ENCODE measurements at regions of chr2 and their contacts with region 1.

Region 1: DNA sequence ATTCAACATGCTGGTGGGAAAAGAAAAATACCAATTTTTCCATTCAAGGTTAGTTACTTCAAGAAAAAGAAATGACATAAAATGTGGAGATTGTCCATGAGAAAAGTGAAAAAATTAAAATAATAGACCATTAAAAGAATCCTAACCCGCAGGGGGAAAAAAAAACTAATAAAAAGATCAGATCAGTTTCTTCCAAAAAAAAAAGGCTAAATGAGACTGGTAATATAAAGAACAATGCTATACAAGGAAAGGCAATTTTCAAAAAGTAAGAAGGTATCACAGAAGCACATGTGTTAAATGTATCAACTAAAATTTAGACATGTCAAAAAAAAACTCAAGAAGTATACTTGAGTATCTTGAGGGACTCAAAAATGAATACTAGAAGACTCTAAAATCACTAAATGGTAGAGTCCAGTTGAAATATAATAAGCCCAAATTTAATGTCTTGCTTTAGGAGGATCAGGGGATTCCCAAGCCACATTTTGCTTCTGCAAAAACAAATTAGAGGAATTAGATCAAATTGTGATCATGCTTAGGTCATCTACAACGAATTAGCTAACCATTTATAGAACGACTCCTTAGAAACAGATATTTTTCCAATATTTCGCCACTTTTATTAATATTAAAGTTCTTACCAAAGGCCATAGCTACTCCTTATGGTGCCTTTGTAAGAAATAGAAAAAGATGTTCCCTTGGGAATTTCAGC is 35.8 kb upstream of the GLS start:
- DNase-seq: no peak
- ATAC-seq: no peak
- H3K4me3 ChIP-seq: no peak overlapping the region
- H3K4me3 Mint-ChIP-seq: no peak overlapping the region
- H3K27ac ChIP-seq: no peak overlapping the region
- H3K27ac Mint-ChIP-seq: no peak overlapping the region
- H3K4me1 ChIP-seq: no peaks in the 10 kb centered on the region
- H3K4me1 Mint-ChIP-seq: no peaks in the 10 kb centered on the region
- H3K27me3 ChIP-seq: no peaks in the 10 kb centered on the region
- H3K27me3 Mint-ChIP-seq: no peaks in the 10 kb centered on the region

Region 2: DNA sequence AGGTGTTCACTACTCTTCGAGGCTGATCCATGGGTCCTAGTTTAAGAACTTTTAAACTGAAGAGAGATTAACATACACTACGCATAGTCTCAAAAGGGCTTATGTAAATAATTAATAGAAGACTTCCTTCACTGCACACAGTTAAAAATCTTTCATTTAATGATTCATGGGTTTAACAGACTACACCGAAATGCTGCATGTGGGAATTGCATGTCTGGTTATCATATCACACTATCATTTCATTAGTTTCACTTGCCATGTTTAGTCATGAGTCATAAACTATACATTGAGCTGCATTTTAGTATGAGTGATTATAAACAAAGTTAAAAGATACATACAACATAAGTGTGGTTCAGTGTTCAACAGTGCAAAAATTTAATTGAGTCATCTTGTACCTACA is 67.0 kb after region 1 on chr2:
- CTCF ChIA-PET with region 1: no interaction called
- POLR2A ChIA-PET with region 1: interaction called in 1 of 2 experiments, 11 read pairs
- DNase-seq: peak in 1 of 35 experiments; percentile 14
- ATAC-seq: no peak
- H3K4me3 ChIP-seq: no peak overlapping the region
- H3K4me3 Mint-ChIP-seq: no peak overlapping the region
- H3K27ac ChIP-seq: no peak overlapping the region
- H3K27ac Mint-ChIP-seq: peak overlapping the region in 1 of 2 donors; percentile 76
- H3K4me1 ChIP-seq: peaks cover 0 to 2% of the 10 kb centered on the region in 2 experiments
- H3K4me1 Mint-ChIP-seq: peaks cover 39 to 47% (median 46%) of the 10 kb centered on the region in 3 donors
- H3K27me3 ChIP-seq: no peaks in the 10 kb centered on the region
- H3K27me3 Mint-ChIP-seq: no peaks in the 10 kb centered on the region